ENCODE measurements at regions of chr7 and their contacts with region 1.

Region 1: GRCh38 chr7:138738551-138739335 is 37.6 kb upstream of the SVOPL start:
- DNase-seq: peak; percentile 73 to 86
- H3K4me3 ChIP-seq: no peak overlapping the region
- H3K27ac ChIP-seq: no peak overlapping the region
- H3K4me1 ChIP-seq: peaks cover 10% of the 10 kb centered on the region
- H3K27me3 ChIP-seq: no peaks in the 10 kb centered on the region
- CTCF ChIP-seq: peak; percentile 99

Region 2: DNA sequence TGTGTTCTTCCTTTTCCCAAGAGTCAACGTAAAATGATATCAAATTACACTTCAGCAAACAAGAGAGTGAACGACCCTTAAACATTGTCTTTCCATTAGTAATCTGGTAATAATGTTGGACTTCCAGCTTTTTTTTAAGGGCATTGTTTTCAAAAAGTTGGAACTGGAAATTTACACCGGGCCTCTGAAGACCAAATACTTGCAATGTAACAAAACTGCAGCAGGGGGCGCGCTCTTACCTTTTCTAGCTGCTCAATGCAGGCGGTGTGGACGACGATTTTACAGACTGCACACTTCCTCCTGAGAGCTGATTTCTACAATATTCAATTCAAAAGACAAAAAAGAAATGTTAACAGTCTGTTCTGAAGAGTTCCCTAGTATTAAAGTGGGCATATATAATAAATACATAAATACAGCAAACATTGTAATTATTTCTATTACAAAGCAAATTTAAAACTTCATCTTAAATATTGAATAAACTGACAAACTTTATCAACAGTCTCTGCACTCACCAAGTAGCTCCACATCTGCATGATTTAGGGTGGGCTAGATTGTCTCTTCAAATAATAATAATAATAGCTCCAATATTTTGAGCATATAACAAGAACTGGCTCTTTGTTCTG is 1082.4 kb before region 1 on chr7:
- CTCF ChIA-PET with region 1: no interaction called
- POLR2A ChIA-PET with region 1: no interaction called
- intact Hi-C with region 1: loop called (anchors 5 kb)
- DNase-seq: peak in 1 of 2 experiments; percentile 75
- H3K4me3 ChIP-seq: no peak overlapping the region
- H3K27ac ChIP-seq: no peak overlapping the region
- H3K4me1 ChIP-seq: no peaks in the 10 kb centered on the region
- H3K27me3 ChIP-seq: peaks cover 57% of the 10 kb centered on the region
- CTCF ChIP-seq: peak; percentile 95

Region 3: GRCh38 chr7:138008547-138009349 is 730.0 kb before region 1 on chr7:
- CTCF ChIA-PET with region 1: interaction called, 3 read pairs
- POLR2A ChIA-PET with region 1: no interaction called
- intact Hi-C with region 1: loop called (anchors 1 kb)
- DNase-seq: peak; percentile 26 to 61
- H3K4me3 ChIP-seq: no peak overlapping the region
- H3K27ac ChIP-seq: no peak overlapping the region
- H3K4me1 ChIP-seq: no peaks in the 10 kb centered on the region
- H3K27me3 ChIP-seq: no peaks in the 10 kb centered on the region
- CTCF ChIP-seq: peak; percentile 96

Region 4: GRCh38 chr7:138459413-138460175 is 279.1 kb before region 1 on chr7:
- CTCF ChIA-PET with region 1: no interaction called
- POLR2A ChIA-PET with region 1: no interaction called
- intact Hi-C with region 1: loop called (anchors 1 kb)
- DNase-seq: peak; percentile 94 to 99
- H3K4me3 ChIP-seq: peak overlapping the region; percentile 53
- H3K27ac ChIP-seq: no peak overlapping the region
- H3K4me1 ChIP-seq: peaks cover 6% of the 10 kb centered on the region
- H3K27me3 ChIP-seq: no peaks in the 10 kb centered on the region
- CTCF ChIP-seq: peak; percentile 62

Region 5: DNA sequence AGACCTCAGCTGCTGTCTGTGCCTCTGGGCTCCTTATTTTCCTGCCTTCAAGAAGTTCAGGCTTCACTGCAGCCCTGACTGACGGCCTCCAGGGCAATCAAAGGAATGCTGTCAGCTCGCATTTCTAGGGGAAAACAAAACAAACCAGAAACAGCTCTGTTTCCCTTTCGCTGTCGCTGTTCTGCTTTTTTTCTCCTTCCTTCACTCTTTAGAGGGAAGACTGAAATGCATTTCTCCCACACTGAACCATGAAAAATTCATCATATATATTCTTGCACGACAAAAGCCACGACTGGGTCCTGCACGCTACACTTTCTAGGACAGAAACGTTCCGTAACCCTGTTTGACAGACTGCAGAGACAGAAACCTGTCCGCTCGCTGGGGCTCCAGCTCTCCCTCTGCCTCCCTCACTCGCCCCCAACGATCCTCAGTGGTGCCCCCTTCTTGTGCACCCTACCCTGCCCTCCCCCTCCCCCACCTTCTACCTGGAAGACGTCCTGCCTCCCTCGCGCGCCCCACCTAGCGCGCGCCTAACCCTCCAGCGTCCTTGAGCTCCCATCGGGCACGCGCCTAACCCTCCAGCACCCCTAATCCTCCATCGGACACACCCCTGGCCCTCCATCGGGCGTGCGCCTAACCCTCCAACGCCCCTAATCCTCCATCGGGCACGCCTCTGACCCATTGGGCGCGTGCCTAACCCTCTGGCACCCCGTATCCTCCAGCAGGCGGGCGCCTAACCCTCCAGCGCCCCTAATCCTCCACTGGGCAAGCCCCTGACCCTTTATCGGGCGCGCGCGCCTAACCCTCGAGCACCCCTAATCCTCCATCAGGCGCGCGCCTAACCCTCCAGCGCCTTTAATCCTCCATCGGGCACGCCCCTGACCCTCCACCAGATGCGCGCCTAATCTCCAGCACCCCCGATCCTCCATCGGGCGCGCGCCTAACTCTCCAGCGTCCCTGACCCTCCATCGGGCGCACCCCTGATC is 74.7 kb before region 1 on chr7:
- CTCF ChIA-PET with region 1: no interaction called
- POLR2A ChIA-PET with region 1: no interaction called
- intact Hi-C with region 1: loop called (anchors 5 kb)
- DNase-seq: peak; percentile 69 to 90
- H3K4me3 ChIP-seq: peak overlapping the region; percentile 53
- H3K27ac ChIP-seq: peak overlapping the region; percentile 64
- H3K4me1 ChIP-seq: peaks cover 32% of the 10 kb centered on the region
- H3K27me3 ChIP-seq: no peaks in the 10 kb centered on the region
- CTCF ChIP-seq: no peak

Region 6: DNA sequence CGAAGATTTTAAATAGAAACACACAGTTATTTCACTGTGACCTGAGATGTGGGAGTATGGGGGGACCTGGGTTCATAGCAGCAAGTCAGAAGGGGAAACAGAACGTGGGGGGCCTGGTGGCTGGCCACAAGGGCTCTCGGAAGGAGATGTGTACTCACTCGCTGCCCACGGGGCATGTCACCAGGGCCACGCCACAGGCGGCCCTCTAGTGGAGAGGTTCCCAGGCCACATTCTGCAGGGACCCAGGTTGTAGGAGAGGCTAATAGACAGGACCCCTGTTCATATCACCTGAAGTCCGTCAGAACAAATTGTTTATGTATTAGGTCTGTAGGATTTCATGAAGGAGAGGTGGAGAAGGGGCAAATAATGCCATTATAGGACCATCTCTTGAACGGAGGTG is 12.5 kb before region 1 on chr7:
- CTCF ChIA-PET with region 1: no interaction called
- POLR2A ChIA-PET with region 1: no interaction called
- intact Hi-C with region 1: no loop called
- DNase-seq: no peak
- H3K4me3 ChIP-seq: no peak overlapping the region
- H3K27ac ChIP-seq: no peak overlapping the region
- H3K4me1 ChIP-seq: no peaks in the 10 kb centered on the region
- H3K27me3 ChIP-seq: no peaks in the 10 kb centered on the region
- CTCF ChIP-seq: 0 out of 2 replicates have a peak, but pooled peaks have one; percentile 31

Region 7: DNA sequence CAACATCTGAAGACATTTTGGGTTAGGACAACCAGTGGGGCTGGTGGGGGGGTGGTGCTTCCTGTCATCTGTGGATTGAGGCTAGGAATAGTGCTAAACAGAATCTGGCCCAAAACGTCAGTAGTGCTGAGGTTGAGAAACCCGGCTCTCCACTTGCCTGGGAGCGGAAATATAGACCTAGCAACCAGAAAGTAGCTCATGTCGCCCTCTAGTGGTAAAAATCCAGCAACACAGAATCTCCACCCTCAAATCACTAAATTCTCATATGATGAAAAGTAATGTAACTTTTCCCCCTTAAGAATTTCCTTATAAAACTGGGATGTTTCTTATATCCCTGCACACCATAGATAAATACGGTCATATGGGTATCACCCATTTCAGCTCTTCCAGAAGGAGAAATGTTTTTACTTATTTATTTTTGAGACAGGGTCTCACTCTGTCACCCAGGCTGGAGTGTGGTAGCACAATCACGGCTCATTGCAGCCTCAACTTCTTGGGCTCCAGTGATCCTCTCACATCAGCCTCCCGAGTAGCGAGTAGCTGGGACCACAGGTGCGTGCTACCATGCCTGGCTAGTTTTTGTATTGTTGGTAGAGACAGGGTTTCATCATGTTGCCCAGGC is 336.4 kb after region 1 on chr7:
- CTCF ChIA-PET with region 1: no interaction called
- POLR2A ChIA-PET with region 1: no interaction called
- intact Hi-C with region 1: loop called (anchors 5 kb)
- DNase-seq: peak; percentile 55 to 61
- H3K4me3 ChIP-seq: no peak overlapping the region
- H3K27ac ChIP-seq: peak overlapping the region; percentile 25; the same call in 1 of the 2 replicates
- H3K4me1 ChIP-seq: no peaks in the 10 kb centered on the region; the same call in 1 of the 2 replicates
- H3K27me3 ChIP-seq: no peaks in the 10 kb centered on the region
- CTCF ChIP-seq: peak; percentile 93

Region 8: DNA sequence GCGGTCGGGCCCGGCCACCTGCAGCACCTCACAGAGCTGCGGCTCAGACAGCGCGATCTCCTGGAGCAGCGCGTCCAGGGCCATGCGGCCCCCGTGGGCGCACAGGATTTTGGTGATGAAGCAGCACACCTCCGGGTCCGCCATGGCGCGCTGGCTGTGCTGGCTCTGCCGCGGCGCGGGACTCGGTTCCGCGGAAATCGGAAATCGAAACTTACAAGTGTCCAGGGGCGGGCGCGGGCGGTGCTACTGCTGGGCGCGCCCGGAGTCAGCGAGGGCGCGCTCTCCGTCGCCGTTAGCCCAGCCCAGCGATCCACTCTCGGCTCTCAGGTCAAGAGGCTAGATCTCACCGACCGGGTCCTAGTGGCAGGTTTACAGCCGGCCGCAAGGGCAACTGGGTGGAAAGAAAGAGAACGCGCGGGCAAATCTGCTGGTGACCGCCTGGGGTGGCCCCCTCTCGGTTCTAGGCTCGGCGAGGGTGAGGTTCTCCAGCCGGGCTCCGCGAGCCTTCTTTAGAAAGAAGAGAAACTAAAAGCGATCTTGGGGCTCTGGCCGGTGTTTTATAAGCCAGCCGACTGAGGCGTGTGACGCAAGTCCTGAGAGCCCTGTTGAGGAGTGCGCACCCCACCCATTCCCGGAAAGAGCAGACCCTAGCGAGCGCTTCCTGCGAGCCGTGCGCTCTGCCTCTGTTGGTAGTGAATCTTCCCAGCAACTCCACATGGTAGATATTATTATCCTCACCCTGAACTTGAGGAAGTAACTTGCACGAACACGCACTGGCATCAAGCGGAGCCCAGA is 370.6 kb after region 1 on chr7 and contains the start of gene ZC3HAV1:
- CTCF ChIA-PET with region 1: no interaction called
- POLR2A ChIA-PET with region 1: no interaction called
- intact Hi-C with region 1: no loop called
- DNase-seq: peak; percentile 76 to 88
- H3K4me3 ChIP-seq: peak within 1 kb of the TSS; percentile 93
- H3K27ac ChIP-seq: peak within 1 kb of the TSS; percentile 75
- H3K4me1 ChIP-seq: peaks cover 21% of the 10 kb centered on the region
- H3K27me3 ChIP-seq: no peaks in the 10 kb centered on the region
- CTCF ChIP-seq: no peak
- total RNA-seq, gene ZC3HAV1: 30.8 and 36.7 TPM in 2 replicates

Region 9: GRCh38 chr7:140367528-140367927 is 1628.8 kb after region 1 on chr7:
- CTCF ChIA-PET with region 1: no interaction called
- POLR2A ChIA-PET with region 1: no interaction called
- intact Hi-C with region 1: no loop called
- DNase-seq: no peak
- H3K4me3 ChIP-seq: no peak overlapping the region
- H3K27ac ChIP-seq: no peak overlapping the region
- H3K4me1 ChIP-seq: no peaks in the 10 kb centered on the region
- H3K27me3 ChIP-seq: no peaks in the 10 kb centered on the region
- CTCF ChIP-seq: no peak